ENCODE measurements at regions of chr4 and their contacts with region 1.

Region 1: DNA sequence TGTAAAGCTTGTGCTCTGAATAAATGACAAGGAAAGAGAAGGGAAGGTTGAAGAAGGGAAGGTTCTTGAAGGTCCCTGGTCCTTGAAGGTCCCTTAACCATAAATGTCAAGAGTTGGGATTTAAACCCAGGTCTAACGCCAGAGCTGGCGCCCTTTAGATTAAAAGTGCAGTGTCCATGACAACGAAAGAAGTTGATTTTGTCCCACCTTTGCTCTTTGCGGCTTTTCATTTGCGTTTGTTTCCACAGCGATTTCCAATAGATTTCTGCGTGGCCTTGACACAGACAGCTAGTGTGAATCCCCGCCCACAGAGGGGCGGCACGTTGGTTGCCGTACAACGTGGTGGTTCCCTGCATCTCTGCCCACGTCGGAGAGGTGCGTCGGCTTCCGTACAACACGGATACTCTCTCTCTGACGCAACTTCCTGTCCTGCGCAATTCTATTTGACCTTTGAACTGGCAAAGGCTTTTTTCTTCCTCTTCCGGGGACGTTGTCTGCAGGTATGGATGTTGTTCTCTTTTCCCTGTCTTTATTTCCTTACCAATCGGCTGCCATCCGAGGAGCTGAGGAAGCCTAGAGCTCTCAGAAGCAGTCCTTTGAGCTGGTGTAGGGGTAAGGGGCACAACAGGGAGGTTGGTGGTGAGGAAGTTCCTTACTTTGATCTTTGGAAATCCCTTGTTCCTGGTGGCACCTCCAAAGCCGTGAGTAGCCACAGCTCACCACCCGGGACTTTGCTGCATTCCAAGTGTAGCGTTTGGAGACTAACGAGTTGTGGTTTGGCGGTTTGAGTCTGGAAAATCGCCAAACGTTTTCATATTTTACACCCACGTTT is at the start of gene RPL34:
- DNase-seq: peak; percentile 93 to 100
- ATAC-seq: peak; percentile 99 to 100 (median 100)
- H3K4me3 ChIP-seq: peak within 1 kb of the TSS; percentile 78
- H3K4me3 Mint-ChIP-seq: peak within 1 kb of the TSS; percentile 88
- H3K27ac ChIP-seq: peak within 1 kb of the TSS; percentile 83
- H3K27ac Mint-ChIP-seq: peak within 1 kb of the TSS; percentile 94 to 96
- H3K4me1 ChIP-seq: peaks cover 12% of the 10 kb centered on the region
- H3K4me1 Mint-ChIP-seq: peaks cover 31 to 45% of the 10 kb centered on the region in 2 donors
- H3K27me3 ChIP-seq: no peaks in the 10 kb centered on the region
- H3K27me3 Mint-ChIP-seq: no peaks in the 10 kb centered on the region
- CTCF ChIP-seq: no peak
- total RNA-seq, gene RPL34: 1,002 to 1,285 (median 1,229) TPM

Region 2: DNA sequence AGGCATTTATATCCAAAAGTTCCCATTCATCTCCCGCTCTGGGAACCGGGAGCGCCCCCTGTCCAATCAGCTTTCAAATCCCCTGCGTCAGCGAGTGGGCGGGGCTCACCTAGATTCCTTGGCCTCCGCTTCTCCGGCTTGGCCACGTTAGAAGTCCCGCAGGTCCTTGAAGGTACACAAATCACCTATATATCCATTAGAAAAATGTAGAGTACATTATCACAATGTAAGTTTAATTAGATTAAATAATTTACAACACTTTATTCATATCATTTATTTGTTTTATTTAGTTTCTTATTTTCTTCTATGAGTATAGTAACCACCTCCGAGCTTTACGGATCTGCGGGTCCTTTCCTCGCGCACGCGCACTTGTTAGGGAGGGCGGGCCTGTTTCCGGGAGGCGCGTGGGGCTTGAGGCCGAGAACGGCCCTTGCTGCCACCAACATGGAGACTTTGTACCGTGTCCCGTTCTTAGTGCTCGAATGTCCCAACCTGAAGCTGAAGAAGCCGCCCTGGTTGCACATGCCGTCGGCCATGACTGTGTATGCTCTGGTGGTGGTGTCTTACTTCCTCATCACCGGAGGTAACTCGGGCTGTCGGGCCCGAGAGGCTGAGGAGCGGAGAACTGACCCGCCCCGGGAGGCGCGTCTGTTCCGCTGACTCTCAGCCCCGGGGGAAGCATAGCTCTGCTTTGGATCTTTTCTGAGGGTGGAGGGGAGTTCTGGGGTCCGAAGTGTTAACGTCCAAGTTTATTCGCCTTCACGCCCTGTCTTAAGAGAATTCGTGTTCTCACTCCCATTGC is 30.1 kb after region 1 on chr4 and contains the start of gene OSTC:
- intact Hi-C with region 1: loop called (anchors 1 kb)
- DNase-seq: peak; percentile 89 to 96
- ATAC-seq: peak; percentile 91 to 92 (median 91)
- H3K4me3 ChIP-seq: peak within 1 kb of the TSS; percentile 65
- H3K4me3 Mint-ChIP-seq: peak within 1 kb of the TSS; percentile 98
- H3K27ac ChIP-seq: peak within 1 kb of the TSS; percentile 87
- H3K27ac Mint-ChIP-seq: peak within 1 kb of the TSS; percentile 89 to 95
- H3K4me1 ChIP-seq: peaks cover 5% of the 10 kb centered on the region
- H3K4me1 Mint-ChIP-seq: peaks cover 36 to 37% of the 10 kb centered on the region in 2 donors
- H3K27me3 ChIP-seq: no peaks in the 10 kb centered on the region
- H3K27me3 Mint-ChIP-seq: peaks cover 0 to 6% of the 10 kb centered on the region in 2 donors
- CTCF ChIP-seq: no peak
- total RNA-seq, gene OSTC: 31.2 to 36.5 (median 32.2) TPM

Measured in natural killer cell (primary cell).